WTC11 (cell line): ENCODE measurements at regions of chr3 and their contacts with region 1.

Region 1: GRCh38 chr3:124559881-124560574 is 170.2 kb upstream of the UMPS start:
- DNase-seq: peak; percentile 81
- ATAC-seq: peak; percentile 82
- H3K4me3 Mint-ChIP-seq: no peak overlapping the region
- H3K27ac Mint-ChIP-seq: no peak overlapping the region
- H3K4me1 Mint-ChIP-seq: peaks cover 30% of the 10 kb centered on the region
- H3K27me3 Mint-ChIP-seq: no peaks in the 10 kb centered on the region
- CTCF ChIP-seq: peak; percentile 88

Region 2: DNA sequence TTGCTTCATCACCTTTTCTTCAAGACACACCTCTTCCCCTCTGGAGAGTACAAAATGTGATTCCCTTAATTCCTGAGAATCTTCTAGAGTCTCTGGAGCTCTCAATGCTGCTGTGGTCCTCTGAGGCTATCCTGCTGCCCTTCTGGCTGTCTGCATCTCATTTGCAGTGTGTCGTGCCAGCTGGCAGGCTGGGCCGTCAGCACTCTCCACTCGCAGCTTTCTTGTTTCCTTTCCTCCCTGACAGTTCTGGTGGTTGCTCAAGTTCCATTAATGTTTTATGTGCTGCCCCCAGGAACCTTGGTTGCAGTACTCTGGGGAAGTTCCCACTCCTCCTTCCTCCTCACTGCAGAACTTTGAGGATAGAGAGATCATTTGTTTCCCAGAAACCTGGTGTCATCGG is 357.3 kb before region 1 on chr3:
- CTCF ChIA-PET with region 1: no interaction called
- POLR2A ChIA-PET with region 1: no interaction called
- DNase-seq: no peak
- ATAC-seq: no peak
- H3K4me3 Mint-ChIP-seq: no peak overlapping the region
- H3K27ac Mint-ChIP-seq: no peak overlapping the region
- H3K4me1 Mint-ChIP-seq: peaks cover 16% of the 10 kb centered on the region; the same call in 1 of the 2 replicates
- H3K27me3 Mint-ChIP-seq: no peaks in the 10 kb centered on the region
- CTCF ChIP-seq: no peak

Region 3: GRCh38 chr3:124351430-124352148 is 208.4 kb before region 1 on chr3:
- CTCF ChIA-PET with region 1: interaction called, 23 read pairs
- POLR2A ChIA-PET with region 1: no interaction called
- DNase-seq: peak; percentile 26
- ATAC-seq: peak; percentile 97
- H3K4me3 Mint-ChIP-seq: no peak overlapping the region
- H3K27ac Mint-ChIP-seq: peak overlapping the region; percentile 34; the same call in 1 of the 2 replicates
- H3K4me1 Mint-ChIP-seq: peaks cover 5% of the 10 kb centered on the region; the same call in 1 of the 2 replicates
- H3K27me3 Mint-ChIP-seq: no peaks in the 10 kb centered on the region
- CTCF ChIP-seq: no peak

Region 4: GRCh38 chr3:124486324-124486723 is 73.7 kb before region 1 on chr3:
- CTCF ChIA-PET with region 1: interaction called, 22 read pairs
- POLR2A ChIA-PET with region 1: no interaction called
- DNase-seq: no peak
- ATAC-seq: peak; percentile 77
- H3K4me3 Mint-ChIP-seq: no peak overlapping the region
- H3K27ac Mint-ChIP-seq: no peak overlapping the region
- H3K4me1 Mint-ChIP-seq: no peaks in the 10 kb centered on the region; the same call in 1 of the 2 replicates
- H3K27me3 Mint-ChIP-seq: no peaks in the 10 kb centered on the region
- CTCF ChIP-seq: no peak

Region 5: DNA sequence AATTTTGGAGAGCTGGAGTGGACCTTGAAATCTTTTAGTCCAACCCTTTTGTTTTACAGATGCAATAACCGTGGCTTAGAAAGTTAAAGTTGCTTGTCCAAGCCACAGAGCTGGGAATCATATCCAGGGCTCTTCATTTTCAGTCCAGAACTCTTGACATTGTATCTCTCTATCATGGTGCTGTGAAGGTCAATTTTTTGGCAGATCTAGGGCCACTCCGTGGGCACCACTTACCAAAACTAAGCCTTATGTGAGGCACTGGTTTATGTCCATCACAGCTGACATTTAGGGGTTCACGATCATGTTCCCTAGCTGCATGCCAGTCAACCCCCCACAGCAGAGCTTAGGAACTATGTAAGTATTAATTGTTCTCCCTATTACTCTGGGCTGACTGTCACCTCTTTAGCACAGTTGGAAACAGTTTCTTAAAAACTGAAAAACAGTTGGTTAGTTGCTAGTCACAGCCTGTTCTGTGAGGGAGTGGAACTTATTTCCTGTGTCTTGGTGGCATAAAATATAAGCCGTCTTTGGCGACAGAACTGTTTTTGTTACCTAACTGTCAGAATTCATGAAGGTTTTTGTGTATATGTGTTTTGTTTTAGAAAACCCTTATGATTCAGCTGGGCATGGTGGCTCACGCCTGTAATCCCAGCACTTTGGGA is 19.3 kb before region 1 on chr3:
- CTCF ChIA-PET with region 1: interaction called, 11 read pairs
- POLR2A ChIA-PET with region 1: interaction called, 3 read pairs
- DNase-seq: no peak
- ATAC-seq: no peak
- H3K4me3 Mint-ChIP-seq: no peak overlapping the region
- H3K27ac Mint-ChIP-seq: no peak overlapping the region
- H3K4me1 Mint-ChIP-seq: peaks cover 12% of the 10 kb centered on the region
- H3K27me3 Mint-ChIP-seq: no peaks in the 10 kb centered on the region
- CTCF ChIP-seq: no peak

Region 6: DNA sequence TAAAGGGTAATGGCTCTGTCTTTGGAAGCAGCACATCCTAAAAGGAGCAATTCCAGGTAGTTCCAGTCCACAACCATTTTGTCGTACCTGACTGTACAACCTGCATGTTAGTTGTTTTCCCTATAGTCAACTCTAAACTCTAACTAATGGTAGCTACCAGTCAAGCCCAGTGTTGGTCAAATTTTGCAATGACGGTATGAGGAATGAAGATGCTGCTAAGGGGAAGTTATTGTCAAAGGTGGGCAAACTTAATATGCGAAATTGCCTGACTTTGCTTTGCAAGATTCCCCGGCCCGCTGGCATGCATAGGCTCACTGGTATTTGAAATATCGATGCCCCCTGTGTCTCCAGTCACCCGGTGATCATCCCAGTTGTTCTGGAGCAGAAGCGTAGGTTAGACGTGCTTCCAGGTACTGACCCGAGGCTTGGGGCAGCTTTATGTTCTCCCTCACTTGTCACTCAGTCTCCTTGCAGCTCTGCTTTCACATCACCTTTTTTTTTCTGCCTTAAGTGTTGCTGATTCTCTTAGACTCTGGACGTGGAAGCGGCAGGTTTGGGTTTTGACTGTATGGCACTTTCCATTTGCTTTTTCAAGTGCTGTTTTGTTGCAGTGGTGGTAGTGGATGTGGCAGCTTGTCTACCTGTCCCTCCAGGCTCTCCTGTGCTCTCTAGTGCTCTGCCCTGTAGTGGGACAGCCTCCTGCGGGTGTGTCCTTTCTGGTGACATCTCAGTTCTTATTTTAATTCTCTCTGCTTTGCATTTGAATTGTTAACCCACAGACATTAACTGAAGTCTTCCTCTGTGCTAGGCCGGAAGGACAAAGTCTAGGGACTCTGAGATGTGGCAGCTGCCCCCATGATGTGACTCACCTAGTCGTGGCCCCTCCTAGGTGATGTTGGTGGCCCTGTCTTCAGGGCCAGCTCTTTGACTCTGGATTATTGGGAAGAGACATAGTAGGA is 74.5 kb after region 1 on chr3:
- CTCF ChIA-PET with region 1: interaction called, 17 read pairs
- POLR2A ChIA-PET with region 1: no interaction called
- DNase-seq: peak; percentile 17
- ATAC-seq: peak; percentile 84
- H3K4me3 Mint-ChIP-seq: peak overlapping the region; percentile 21; the same call in 1 of the 2 replicates
- H3K27ac Mint-ChIP-seq: peak overlapping the region; percentile 80
- H3K4me1 Mint-ChIP-seq: peaks cover 67% of the 10 kb centered on the region
- H3K27me3 Mint-ChIP-seq: no peaks in the 10 kb centered on the region; the same call in 1 of the 2 replicates
- CTCF ChIP-seq: no peak

Region 7: DNA sequence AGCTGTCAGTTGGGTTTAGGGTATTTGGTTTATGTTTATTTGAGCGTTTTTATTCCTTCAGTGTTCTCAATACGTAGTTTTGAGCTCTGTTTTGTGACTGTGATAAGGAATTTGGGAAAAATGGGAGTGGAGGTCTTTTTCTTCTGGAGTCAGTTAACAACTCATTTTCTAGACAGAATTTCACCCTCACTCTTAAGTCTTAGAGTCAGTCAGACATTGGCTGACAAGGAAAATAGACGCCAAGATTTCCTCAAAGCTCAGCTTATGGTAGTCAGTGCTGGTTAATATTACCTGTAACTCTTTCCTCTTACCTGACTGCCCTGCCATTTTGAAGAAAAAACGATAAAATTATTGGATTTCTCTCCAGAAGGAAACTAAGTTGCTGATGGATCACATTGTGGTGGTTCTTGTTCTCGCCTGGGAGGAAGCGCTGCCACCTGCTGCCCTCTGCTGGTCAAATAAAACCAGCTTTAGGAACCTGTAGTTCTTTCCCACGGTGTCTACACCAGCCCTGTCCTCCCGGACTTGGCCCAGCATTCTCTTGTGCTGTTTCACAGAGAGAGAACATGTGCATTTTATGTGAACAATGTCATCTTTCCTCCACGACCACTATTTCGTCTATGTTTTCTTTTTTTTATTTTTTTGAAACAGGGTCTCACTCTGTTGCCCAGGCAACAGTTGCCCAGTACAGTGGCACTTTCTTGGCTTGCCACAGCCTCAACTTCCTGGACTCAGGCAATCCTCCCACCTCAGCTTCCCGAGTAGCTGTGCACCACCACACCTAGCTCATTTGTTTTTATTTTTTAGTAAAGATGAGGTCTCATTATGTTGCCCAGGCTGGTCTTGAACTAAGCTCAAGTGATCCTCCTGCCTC is 128.8 kb after region 1 on chr3:
- CTCF ChIA-PET with region 1: interaction called, 89 read pairs
- POLR2A ChIA-PET with region 1: no interaction called
- DNase-seq: peak; percentile 83
- ATAC-seq: peak; percentile 86
- H3K4me3 Mint-ChIP-seq: no peak overlapping the region
- H3K27ac Mint-ChIP-seq: no peak overlapping the region
- H3K4me1 Mint-ChIP-seq: peaks cover 8% of the 10 kb centered on the region; the same call in 1 of the 2 replicates
- H3K27me3 Mint-ChIP-seq: no peaks in the 10 kb centered on the region
- CTCF ChIP-seq: peak; percentile 80